Gastrocnemius medialis (tissue), 4 donors: ENCODE measurements at regions of chr17 and their contacts with region 1.

Region 1: GRCh38 chr17:82518826-82519810 is at the start of gene FOXK2:
- DNase-seq: peak; percentile 92 to 95
- ATAC-seq: peak; percentile 94 to 95
- H3K4me3 ChIP-seq: peak within 1 kb of the TSS; percentile 63 to 84 (median 73)
- H3K27ac ChIP-seq: peak within 1 kb of the TSS; percentile 85 to 97 (median 90)
- H3K4me1 ChIP-seq: peaks cover 21 to 23% of the 10 kb centered on the region in 2 donors
- H3K27me3 ChIP-seq: no peaks in the 10 kb centered on the region
- CTCF ChIP-seq: peak in 4 of 5 experiments; percentile 7 to 54 (median 26)
- POLR2A ChIP-seq: peak; percentile 93 to 95
- total RNA-seq, gene FOXK2: 70.7 to 109 (median 85.0) TPM

Region 2: DNA sequence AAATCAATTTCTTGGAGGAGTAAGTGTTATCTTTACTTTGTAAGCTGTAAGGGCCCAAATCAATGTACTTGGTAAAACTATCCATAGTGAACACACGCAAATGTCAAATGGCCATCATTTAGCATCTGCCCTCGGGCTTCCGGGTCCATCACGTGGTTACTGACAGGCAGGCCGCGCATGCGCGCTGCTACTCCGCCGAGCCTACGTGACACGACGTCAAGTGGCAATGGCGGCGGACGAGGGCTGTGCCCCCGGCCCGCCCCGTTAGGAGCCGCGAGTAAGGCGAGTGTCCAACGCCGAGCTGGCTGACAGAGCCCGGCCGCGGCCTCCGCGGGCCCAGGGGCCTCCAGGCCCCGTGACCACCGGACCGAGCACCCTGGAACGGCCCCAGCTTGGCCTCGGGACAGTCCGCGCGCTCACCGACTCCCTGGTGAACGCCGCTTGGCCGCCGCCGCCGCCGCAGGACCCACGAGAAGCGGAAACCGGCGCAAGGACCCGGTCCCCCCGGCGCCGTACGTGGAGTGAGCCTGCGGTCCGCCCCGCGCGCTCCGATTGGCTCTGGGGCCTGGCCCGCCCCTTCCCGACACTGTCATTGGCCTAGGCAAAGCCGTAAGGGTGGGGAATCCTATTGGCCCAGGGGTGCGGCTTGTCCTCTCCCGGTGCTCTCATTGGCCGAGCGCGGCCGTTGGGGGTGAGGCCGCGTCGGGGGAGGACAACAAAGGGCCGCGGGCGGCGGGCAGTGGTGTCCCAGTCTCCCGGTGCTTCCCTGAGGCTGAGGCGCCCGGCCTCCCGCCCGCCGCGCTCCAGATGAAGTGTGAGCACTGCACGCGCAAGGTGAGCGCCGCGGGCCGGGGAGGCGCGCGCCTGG is 60.9 kb before region 1 on chr17 and contains the start of gene NARF:
- in situ Hi-C with region 1: no loop called
- intact Hi-C with region 1: loop called (anchors 1 kb)
- DNase-seq: peak; percentile 99
- ATAC-seq: peak; percentile 92 to 94
- H3K4me3 ChIP-seq: peak within 1 kb of the TSS; percentile 75 to 98 (median 80)
- H3K27ac ChIP-seq: peak within 1 kb of the TSS; percentile 99 to 100 (median 100)
- H3K4me1 ChIP-seq: peaks cover 16 to 21% of the 10 kb centered on the region in 2 donors
- H3K27me3 ChIP-seq: no peaks in the 10 kb centered on the region
- CTCF ChIP-seq: no peak
- POLR2A ChIP-seq: peak; percentile 99 to 100
- total RNA-seq, gene NARF: 29.6 to 63.4 (median 49.0) TPM

Region 3: DNA sequence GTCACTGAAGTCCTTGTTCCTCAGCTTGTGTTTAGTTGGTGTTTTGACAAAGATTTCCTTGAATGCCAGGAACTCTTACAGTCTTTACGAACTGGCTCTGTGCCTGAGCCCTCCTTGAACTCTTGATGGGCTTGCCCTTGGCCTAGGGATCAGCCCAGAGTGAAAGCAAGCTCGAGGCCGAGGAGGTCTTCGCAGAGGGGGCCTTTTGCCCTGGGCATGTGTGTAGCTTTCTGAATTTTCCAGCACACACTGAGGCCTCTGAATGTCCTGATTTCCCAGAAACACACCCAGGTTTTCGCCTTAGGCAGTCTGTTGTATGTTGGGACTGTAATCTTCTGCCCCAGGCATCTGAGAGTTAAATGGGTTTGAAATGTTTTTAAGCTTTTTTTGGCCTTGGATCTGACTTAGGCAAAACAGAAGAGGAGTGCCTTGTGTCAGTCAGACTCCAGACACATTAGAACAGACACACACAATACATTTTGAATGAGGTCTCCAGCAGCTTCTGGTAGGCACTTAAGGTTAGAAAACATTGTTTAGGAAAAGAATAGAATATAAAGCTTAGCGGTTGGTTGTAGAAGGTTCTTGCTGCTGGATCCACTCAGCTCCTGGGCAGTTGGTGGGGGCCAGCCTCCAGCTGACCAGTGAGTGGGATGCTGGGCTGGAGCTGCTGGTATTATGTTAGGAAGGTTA is 17.5 kb after region 1 on chr17:
- in situ Hi-C with region 1: no loop called
- intact Hi-C with region 1: no loop called
- DNase-seq: no peak
- ATAC-seq: peak; percentile 42 to 52
- H3K4me3 ChIP-seq: peak overlapping the region; percentile 18 to 33 (median 22)
- H3K27ac ChIP-seq: peak overlapping the region; percentile 83 to 93 (median 86)
- H3K4me1 ChIP-seq: peaks cover 54 to 63% of the 10 kb centered on the region in 2 donors
- H3K27me3 ChIP-seq: no peaks in the 10 kb centered on the region
- CTCF ChIP-seq: no peak
- POLR2A ChIP-seq: no peak